Endothelial cell of umbilical vein (primary cell): ENCODE measurements at regions of chr2 and their contacts with region 1.

Region 1: GRCh38 chr2:212777020-212777491 is 238.5 kb upstream of the ERBB4 start:
- DNase-seq: peak; percentile 39
- H3K4me3 ChIP-seq: no peak overlapping the region
- H3K27ac ChIP-seq: no peak overlapping the region
- H3K4me1 ChIP-seq: no peaks in the 10 kb centered on the region
- H3K27me3 ChIP-seq: no peaks in the 10 kb centered on the region
- CTCF ChIP-seq: peak; percentile 30 to 39
- POLR2A ChIP-seq: no peak

Region 2: GRCh38 chr2:212686285-212686895 is 90.7 kb before region 1 on chr2:
- CTCF ChIA-PET with region 1: interaction called, 11 read pairs
- POLR2A ChIA-PET with region 1: no interaction called
- dilution Hi-C with region 1: no loop called
- intact Hi-C with region 1: loop called (anchors 5 kb)
- DNase-seq: peak; percentile 67
- H3K4me3 ChIP-seq: no peak overlapping the region
- H3K27ac ChIP-seq: no peak overlapping the region
- H3K4me1 ChIP-seq: peaks cover 3% of the 10 kb centered on the region
- H3K27me3 ChIP-seq: no peaks in the 10 kb centered on the region
- CTCF ChIP-seq: peak; percentile 60 to 68
- POLR2A ChIP-seq: no peak

Region 3: GRCh38 chr2:212730994-212731393 is 46.1 kb before region 1 on chr2:
- CTCF ChIA-PET with region 1: no interaction called
- POLR2A ChIA-PET with region 1: no interaction called
- dilution Hi-C with region 1: no loop called
- intact Hi-C with region 1: no loop called
- DNase-seq: no peak
- H3K4me3 ChIP-seq: no peak overlapping the region
- H3K27ac ChIP-seq: no peak overlapping the region
- H3K4me1 ChIP-seq: no peaks in the 10 kb centered on the region
- H3K27me3 ChIP-seq: no peaks in the 10 kb centered on the region
- CTCF ChIP-seq: no peak
- POLR2A ChIP-seq: no peak

Region 4: GRCh38 chr2:212797484-212798205 is 20.6 kb after region 1 on chr2:
- CTCF ChIA-PET with region 1: interaction called, 11 read pairs
- POLR2A ChIA-PET with region 1: no interaction called
- dilution Hi-C with region 1: no loop called
- intact Hi-C with region 1: no loop called
- DNase-seq: no peak
- H3K4me3 ChIP-seq: no peak overlapping the region
- H3K27ac ChIP-seq: no peak overlapping the region
- H3K4me1 ChIP-seq: no peaks in the 10 kb centered on the region
- H3K27me3 ChIP-seq: no peaks in the 10 kb centered on the region
- CTCF ChIP-seq: no peak
- POLR2A ChIP-seq: no peak

Region 5: DNA sequence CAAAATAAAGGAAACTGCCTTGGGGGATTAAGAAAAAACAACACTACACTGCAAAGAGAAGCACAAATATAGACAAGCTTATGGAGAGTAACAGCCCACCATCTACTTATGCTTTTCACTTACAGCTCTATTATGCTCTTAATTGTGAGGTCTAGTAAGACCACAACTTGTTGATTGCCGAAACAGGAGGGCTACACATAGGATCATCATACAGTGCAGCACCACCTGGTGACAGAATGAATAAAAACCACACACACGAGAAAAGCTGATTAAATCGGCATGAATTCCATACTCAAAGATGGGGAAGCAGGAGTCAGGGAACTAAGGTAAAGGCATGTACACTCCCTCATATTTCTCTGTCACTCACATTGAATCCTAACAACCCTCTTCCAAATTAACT is 115.1 kb after region 1 on chr2:
- CTCF ChIA-PET with region 1: interaction called, 399 read pairs
- POLR2A ChIA-PET with region 1: no interaction called
- dilution Hi-C with region 1: no loop called
- intact Hi-C with region 1: loop called (anchors 1 kb)
- DNase-seq: peak; percentile 60
- H3K4me3 ChIP-seq: no peak overlapping the region
- H3K27ac ChIP-seq: no peak overlapping the region
- H3K4me1 ChIP-seq: no peaks in the 10 kb centered on the region
- H3K27me3 ChIP-seq: no peaks in the 10 kb centered on the region
- CTCF ChIP-seq: peak; percentile 10 to 38
- POLR2A ChIP-seq: no peak

Region 6: GRCh38 chr2:213137064-213137463 is 360.0 kb after region 1 on chr2:
- CTCF ChIA-PET with region 1: no interaction called
- POLR2A ChIA-PET with region 1: no interaction called
- dilution Hi-C with region 1: no loop called
- intact Hi-C with region 1: no loop called
- DNase-seq: no peak
- H3K4me3 ChIP-seq: no peak overlapping the region
- H3K27ac ChIP-seq: no peak overlapping the region
- H3K4me1 ChIP-seq: no peaks in the 10 kb centered on the region
- H3K27me3 ChIP-seq: no peaks in the 10 kb centered on the region
- CTCF ChIP-seq: no peak
- POLR2A ChIP-seq: no peak

Region 7: DNA sequence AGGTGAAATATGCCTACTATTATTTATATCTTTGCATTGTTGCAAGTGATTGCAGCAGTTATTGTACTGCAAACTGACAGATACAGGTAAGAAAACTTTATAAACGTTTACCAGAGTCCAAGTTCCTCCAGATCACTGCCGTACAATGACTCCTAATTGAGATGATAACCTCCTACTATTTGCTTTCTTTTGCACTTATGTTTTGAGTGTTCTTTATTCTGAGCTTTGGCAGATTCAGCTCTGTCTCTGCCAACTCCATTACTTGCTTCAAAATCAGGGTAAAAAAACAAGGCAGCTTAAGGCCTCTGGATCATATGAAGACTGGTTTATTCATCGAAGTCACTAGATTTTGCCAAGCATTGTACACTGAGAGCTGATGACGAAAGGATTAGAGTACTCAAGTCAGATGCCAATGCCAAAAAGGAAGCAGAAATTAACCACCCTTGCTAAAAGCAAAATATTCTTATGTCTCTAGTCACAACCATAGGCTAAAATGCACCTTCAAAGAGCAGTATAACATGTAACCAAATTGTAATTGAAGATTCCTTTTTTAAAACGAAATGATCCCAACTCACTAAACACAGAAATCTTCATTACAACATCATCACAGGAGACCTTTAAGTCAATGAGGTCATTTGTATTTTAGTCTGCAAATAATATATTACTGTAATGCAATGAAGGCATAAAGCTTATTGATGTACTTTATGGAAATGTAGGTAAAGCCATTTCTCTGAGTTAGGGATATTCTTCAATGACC is 384.9 kb after region 1 on chr2:
- CTCF ChIA-PET with region 1: interaction called, 11 read pairs
- POLR2A ChIA-PET with region 1: no interaction called
- dilution Hi-C with region 1: no loop called
- intact Hi-C with region 1: no loop called
- DNase-seq: no peak
- H3K4me3 ChIP-seq: no peak overlapping the region
- H3K27ac ChIP-seq: no peak overlapping the region
- H3K4me1 ChIP-seq: no peaks in the 10 kb centered on the region
- H3K27me3 ChIP-seq: no peaks in the 10 kb centered on the region
- CTCF ChIP-seq: no peak
- POLR2A ChIP-seq: no peak